ENCODE measurements at regions of chr14 and their contacts with region 1.

Region 1: GRCh38 chr14:95561001-95561412 is 26.2 kb downstream of the GLRX5 start:
- DNase-seq: peak; percentile 95
- ATAC-seq: peak; percentile 100
- H3K4me3 Mint-ChIP-seq: no peak overlapping the region
- H3K27ac Mint-ChIP-seq: no peak overlapping the region
- H3K4me1 Mint-ChIP-seq: no peaks in the 10 kb centered on the region
- H3K27me3 Mint-ChIP-seq: peaks cover 9% of the 10 kb centered on the region

Region 2: GRCh38 chr14:95327558-95328374 is 233.2 kb before region 1 on chr14:
- CTCF ChIA-PET with region 1: no interaction called
- POLR2A ChIA-PET with region 1: no interaction called
- intact Hi-C with region 1: no loop called
- DNase-seq: no peak
- ATAC-seq: no peak
- H3K4me3 Mint-ChIP-seq: no peak overlapping the region
- H3K27ac Mint-ChIP-seq: no peak overlapping the region
- H3K4me1 Mint-ChIP-seq: no peaks in the 10 kb centered on the region
- H3K27me3 Mint-ChIP-seq: peaks cover 6% of the 10 kb centered on the region

Region 3: GRCh38 chr14:95662376-95663186 is 101.6 kb after region 1 on chr14:
- CTCF ChIA-PET with region 1: interaction called, 3 read pairs
- POLR2A ChIA-PET with region 1: no interaction called
- intact Hi-C with region 1: loop called in 1 of 2 experiments (anchors 5 kb)
- DNase-seq: no peak
- ATAC-seq: no peak
- H3K4me3 Mint-ChIP-seq: no peak overlapping the region
- H3K27ac Mint-ChIP-seq: no peak overlapping the region
- H3K4me1 Mint-ChIP-seq: peaks cover 4% of the 10 kb centered on the region
- H3K27me3 Mint-ChIP-seq: peaks cover 16% of the 10 kb centered on the region

Region 4: GRCh38 chr14:95683793-95684192 is 122.8 kb after region 1 on chr14:
- CTCF ChIA-PET with region 1: interaction called, 10 read pairs
- POLR2A ChIA-PET with region 1: no interaction called
- intact Hi-C with region 1: loop called (anchors 1 to 2 kb)
- DNase-seq: peak; percentile 52
- ATAC-seq: peak; percentile 53
- H3K4me3 Mint-ChIP-seq: no peak overlapping the region
- H3K27ac Mint-ChIP-seq: no peak overlapping the region
- H3K4me1 Mint-ChIP-seq: no peaks in the 10 kb centered on the region
- H3K27me3 Mint-ChIP-seq: peaks cover 20% of the 10 kb centered on the region

Region 5: GRCh38 chr14:95774265-95775160 is 213.5 kb after region 1 on chr14:
- CTCF ChIA-PET with region 1: interaction called, 5 read pairs
- POLR2A ChIA-PET with region 1: no interaction called
- intact Hi-C with region 1: loop called (anchors 1 kb)
- DNase-seq: peak; percentile 73
- ATAC-seq: no peak
- H3K4me3 Mint-ChIP-seq: no peak overlapping the region
- H3K27ac Mint-ChIP-seq: no peak overlapping the region
- H3K4me1 Mint-ChIP-seq: peaks cover 2% of the 10 kb centered on the region
- H3K27me3 Mint-ChIP-seq: peaks cover 4% of the 10 kb centered on the region

Region 6: DNA sequence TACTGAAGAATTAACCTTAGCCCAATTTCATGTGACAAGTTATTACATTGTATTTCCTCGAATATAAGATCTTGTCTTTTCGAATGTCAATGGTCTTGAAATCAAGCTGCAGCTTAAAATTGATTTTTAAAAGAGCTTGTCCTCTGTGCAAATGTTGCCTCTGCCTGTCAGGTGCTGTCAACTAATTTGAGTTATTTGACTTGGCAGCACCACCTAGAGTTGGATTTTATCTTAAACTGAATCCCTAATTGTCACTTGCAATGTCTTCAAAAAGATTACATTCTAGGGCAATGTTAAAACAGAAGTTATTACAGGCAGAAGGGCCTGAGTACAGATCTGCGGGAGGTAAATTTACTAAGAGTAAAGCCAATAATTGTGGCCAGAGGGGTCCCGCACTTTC is 289.4 kb after region 1 on chr14:
- CTCF ChIA-PET with region 1: no interaction called
- POLR2A ChIA-PET with region 1: no interaction called
- intact Hi-C with region 1: no loop called
- DNase-seq: no peak
- ATAC-seq: no peak
- H3K4me3 Mint-ChIP-seq: no peak overlapping the region
- H3K27ac Mint-ChIP-seq: no peak overlapping the region
- H3K4me1 Mint-ChIP-seq: no peaks in the 10 kb centered on the region
- H3K27me3 Mint-ChIP-seq: peaks cover 23% of the 10 kb centered on the region

Region 7: DNA sequence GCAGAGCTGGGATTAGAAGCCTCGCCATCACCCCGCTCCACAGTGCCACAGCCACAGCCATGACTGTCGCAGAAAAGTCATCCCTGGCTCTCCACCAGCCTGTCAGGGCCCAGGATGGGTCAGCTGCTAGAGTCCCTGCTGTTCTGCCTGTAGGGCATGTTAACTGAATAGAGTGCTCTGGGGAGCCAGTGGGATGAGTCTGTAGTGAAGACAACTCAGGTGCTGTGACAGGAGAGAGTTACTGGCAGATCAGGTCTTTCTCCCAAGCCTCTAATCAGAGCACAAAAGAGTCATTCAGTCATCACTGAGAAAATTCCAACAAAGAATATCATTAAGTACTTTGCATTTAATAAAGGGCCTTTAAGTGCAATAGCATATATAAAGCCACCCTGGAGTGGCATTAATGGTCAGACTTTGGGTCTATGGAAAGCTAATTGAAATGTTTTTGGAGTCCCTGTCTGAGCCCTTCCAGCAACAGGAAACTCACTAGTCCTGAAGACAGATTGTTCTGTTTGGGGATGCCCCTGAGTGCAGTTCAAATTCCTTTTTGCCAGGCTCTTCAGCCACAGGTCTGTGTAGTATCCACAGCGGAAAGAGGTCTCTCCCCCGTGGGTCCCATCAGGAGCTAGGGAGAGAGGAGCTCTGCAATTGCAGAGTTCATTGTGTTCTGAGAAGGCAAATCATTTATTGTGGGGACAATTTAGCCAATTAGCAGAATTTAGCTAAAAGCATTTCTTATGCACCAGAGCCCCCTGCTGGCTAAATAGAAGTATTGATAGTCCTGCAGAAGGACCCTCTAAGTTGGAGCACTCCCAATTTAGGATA is 433.0 kb after region 1 on chr14:
- CTCF ChIA-PET with region 1: interaction called, 16 read pairs
- POLR2A ChIA-PET with region 1: interaction called, 4 read pairs
- intact Hi-C with region 1: loop called (anchors 1 kb)
- DNase-seq: peak; percentile 42
- ATAC-seq: no peak
- H3K4me3 Mint-ChIP-seq: no peak overlapping the region
- H3K27ac Mint-ChIP-seq: no peak overlapping the region
- H3K4me1 Mint-ChIP-seq: no peaks in the 10 kb centered on the region
- H3K27me3 Mint-ChIP-seq: peaks cover 30% of the 10 kb centered on the region

Region 8: GRCh38 chr14:96100161-96101029 is 539.4 kb after region 1 on chr14:
- CTCF ChIA-PET with region 1: interaction called, 3 read pairs
- POLR2A ChIA-PET with region 1: no interaction called
- intact Hi-C with region 1: loop called in 1 of 2 experiments (anchors 1 kb)
- DNase-seq: peak; percentile 84
- ATAC-seq: peak; percentile 66
- H3K4me3 Mint-ChIP-seq: no peak overlapping the region
- H3K27ac Mint-ChIP-seq: no peak overlapping the region
- H3K4me1 Mint-ChIP-seq: no peaks in the 10 kb centered on the region
- H3K27me3 Mint-ChIP-seq: no peaks in the 10 kb centered on the region

Region 9: DNA sequence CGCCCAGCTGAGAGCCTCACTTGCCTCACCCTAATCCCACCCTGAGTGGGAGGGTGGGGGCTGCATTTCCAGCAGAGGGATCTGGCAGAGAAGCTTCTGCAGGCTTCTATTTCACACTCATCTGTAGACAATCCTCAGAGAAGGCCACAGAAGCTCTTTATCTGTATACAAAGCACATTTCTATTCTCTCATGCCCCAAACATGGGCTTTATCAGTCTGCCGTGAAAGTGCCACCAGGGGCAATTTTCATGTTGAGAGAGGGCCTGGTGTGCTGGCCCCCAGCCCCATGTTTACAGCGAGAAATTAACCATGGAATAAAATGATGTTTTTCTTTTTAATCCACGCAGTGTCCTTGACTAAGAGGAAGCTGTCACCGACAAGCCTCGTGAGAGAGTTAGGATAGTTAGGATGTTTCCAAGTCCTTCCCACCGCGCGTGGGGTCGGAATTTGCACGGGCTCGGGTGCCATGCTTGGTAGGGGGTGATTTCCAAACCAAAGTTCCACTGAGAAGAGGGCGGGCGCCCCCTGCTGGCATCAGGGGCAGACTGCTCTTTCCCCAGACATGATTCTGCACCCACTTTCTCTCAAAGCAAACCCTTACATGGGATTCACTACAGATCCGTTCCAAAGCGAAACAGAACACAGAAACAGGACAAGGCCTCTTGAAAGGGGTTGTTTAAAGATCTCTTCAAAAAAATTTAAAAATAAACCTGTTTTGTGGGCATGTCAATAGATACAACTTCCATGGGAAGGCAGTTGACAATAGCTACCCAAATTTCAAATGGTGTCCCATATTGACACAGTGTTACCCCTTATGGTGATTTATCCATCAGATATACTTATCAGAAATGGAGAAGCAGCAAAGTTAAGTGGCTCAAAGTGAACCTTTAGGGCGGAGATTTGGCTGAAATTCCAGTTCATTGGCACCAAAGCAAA is 714.4 kb after region 1 on chr14:
- CTCF ChIA-PET with region 1: no interaction called
- POLR2A ChIA-PET with region 1: no interaction called
- intact Hi-C with region 1: loop called in 1 of 2 experiments (anchors 1 kb)
- DNase-seq: peak; percentile 86
- ATAC-seq: peak; percentile 47
- H3K4me3 Mint-ChIP-seq: no peak overlapping the region
- H3K27ac Mint-ChIP-seq: no peak overlapping the region
- H3K4me1 Mint-ChIP-seq: no peaks in the 10 kb centered on the region
- H3K27me3 Mint-ChIP-seq: no peaks in the 10 kb centered on the region